Left cardiac atrium (tissue), 4 donors: ENCODE measurements at regions of chr12 and their contacts with region 1.

Region 1: GRCh38 chr12:110888256-110888991 is 32.0 kb downstream of the MYL2 start:
- DNase-seq: no peak
- ATAC-seq: no peak

Region 2: DNA sequence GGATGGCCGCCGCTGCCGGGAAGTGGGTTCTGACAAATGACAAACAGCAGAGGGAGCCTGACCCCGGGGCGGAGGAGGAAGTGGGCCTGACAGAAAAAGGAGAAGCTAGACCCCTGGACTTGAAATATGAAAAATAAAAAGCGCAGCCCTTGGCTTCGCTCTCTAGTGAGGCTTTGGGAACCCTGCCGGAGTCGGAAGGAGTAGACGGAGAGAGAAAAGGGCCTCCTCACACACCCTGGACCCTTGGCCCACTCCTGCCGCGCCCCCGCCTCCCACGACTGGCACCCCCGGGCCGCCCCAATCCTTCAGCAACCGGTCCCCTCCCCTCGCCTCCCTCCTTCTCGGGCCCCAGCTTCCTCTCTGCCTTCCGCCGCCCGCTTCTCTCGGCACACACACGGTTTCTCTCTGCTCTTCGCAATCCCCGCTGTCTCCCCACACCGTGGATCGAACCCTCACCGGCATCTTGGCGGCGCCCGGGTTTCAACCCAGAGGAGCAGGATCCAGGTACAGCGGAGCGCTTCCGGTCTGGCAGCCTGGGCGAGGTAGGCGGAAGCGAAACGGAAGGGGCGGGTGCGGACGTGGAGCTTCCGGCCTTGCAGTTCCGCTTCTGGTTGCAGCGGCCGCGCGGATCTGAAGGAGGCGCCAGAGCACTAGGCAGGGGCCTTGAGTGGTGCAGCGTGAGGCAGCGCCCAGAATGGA is 438.5 kb before region 1 on chr12 and contains the start of gene ARPC3:
- intact Hi-C with region 1: loop called in 1 of 2 experiments (anchors 5 kb)
- DNase-seq: peak; percentile 96
- ATAC-seq: peak; percentile 99
- total RNA-seq, gene ARPC3: 108 to 123 TPM

Region 3: GRCh38 chr12:110501752-110502738 is 386.4 kb before region 1 on chr12 and contains the starts of genes RAD9B and VPS29:
- intact Hi-C with region 1: loop called in 1 of 2 experiments (anchors 5 kb)
- DNase-seq: peak; percentile 99
- ATAC-seq: peak; percentile 98 to 99
- total RNA-seq, gene RAD9B: 2.6 to 3.1 TPM
- total RNA-seq, gene VPS29: 92.0 to 109 TPM

Region 4: DNA sequence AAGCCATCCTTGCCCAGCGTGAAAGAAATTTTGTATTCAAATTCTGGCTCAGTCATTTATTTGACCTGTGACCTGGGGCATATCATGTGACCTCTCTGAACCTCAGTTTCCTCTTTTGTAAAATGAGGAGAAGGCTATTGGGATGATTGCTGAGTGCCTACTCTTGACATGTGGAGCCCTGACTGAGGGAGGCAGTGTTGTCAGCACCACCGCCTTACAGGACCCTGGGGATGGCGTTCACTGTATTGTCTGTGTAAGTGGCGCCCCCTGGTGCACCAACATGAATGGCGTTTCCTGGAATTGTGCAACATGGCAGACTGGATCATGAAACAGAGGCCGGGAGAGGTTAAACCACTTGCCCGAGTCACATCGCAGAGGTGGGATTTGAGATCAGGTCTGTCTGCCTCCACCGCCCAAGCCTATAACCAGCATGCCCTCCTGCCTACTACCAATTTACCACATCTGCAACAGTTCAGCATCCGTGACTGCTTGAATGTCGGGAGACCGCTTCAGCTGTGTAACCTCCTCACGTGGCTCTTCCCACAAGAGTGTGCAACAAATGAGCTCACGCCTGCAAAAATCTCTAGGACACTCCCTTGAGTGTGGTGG is 61.7 kb before region 1 on chr12:
- intact Hi-C with region 1: loop called in 1 of 2 experiments (anchors 5 kb)
- DNase-seq: peak; percentile 87
- ATAC-seq: peak; percentile 97

Region 5: DNA sequence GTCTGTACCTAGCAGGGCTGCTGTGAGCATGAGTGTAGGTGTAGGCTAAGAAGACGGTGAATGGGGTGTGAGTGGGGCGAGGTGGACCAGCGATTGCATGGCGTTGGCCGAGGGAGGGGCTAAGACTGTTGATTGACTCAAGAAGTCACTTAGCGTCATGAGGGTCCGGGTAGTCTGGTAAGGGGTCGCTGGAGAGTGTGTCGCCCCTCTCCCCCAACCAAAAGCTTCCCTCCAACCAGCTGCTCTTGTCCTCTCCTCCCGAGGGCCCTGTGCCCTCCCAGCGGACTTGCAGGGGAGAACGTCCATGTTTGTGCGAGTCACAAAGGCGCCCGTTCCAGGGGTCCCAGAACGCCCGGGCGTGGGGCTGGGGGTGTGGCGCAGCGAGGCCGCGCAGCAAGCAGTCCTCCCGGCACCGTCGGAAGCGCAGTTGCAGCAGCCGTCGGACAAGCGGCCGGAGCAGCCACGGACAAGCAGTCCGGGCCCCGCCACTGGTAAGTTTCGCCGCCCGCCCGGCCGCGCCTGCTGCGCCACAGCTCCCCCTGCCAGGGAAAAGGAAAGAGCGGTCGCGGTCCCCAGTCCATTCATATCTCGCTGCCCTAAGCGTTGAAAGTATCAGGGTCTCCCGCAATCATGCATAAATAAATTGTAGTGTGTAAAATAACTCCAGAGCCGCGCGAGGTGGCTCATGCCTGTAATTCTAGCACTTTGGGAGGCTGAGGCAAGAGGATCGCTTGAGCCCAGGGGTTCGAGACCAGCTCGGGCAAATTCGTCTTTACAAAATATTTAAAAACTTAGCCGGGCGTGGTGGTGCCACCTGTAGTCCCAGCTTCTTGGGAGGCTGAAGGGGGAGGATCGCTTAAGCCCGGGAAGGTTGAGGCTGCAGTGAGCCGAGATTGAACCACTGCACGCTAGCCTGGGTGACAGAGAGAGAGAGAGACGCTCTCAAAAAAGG is 41.5 kb before region 1 on chr12 and contains the start of gene CCDC63:
- intact Hi-C with region 1: loop called in 1 of 2 experiments (anchors 5 kb)
- DNase-seq: peak; percentile 61
- ATAC-seq: peak; percentile 49 to 55
- total RNA-seq, gene CCDC63: not detected

Region 6: GRCh38 chr12:111599459-111600204 is 711.2 kb after region 1 on chr12:
- intact Hi-C with region 1: no loop called
- DNase-seq: peak; percentile 96
- ATAC-seq: peak; percentile 91 to 93